Dorsolateral prefrontal cortex (tissue), 120 donors: ENCODE measurements at regions of chr22 and their contacts with region 1.

Region 1: GRCh38 chr22:41501209-41501608 is 32.3 kb downstream of the ACO2 start:
- DNase-seq: peak in 1 of 10 donors; percentile 43
- H3K4me3 ChIP-seq: no peak overlapping the region
- H3K27ac ChIP-seq: peak overlapping the region in 55 of 59 donors; percentile 17 to 100 (median 89)
- H3K27me3 ChIP-seq: no peaks in the 10 kb centered on the region
- CTCF ChIP-seq: peak in 51 of 56 donors; percentile 12 to 57 (median 39)

Region 2: GRCh38 chr22:41468381-41469217 is 32.6 kb before region 1 on chr22 and contains the starts of genes ACO2 and PHF5A:
- intact Hi-C with region 1: loop called in 1 of 2 experiments (anchors 5 kb)
- DNase-seq: peak; percentile 96 to 99 (median 98)
- H3K4me3 ChIP-seq: peak within 1 kb of the TSS; percentile 69 to 100 (median 98)
- H3K27ac ChIP-seq: peak within 1 kb of the TSS; percentile 85 to 99 (median 97)
- H3K27me3 ChIP-seq: no peaks in the 10 kb centered on the region
- CTCF ChIP-seq: peak in 31 of 56 donors; percentile 5 to 53 (median 28)
- total RNA-seq, gene ACO2: 173 to 339 (median 261) TPM
- total RNA-seq, gene PHF5A: 10.3 to 36.8 (median 22.3) TPM